Activated CD4-positive, alpha-beta memory T cell treated with anti-CD3 and anti-CD28 coated beads for 36 hours (primary cell): ENCODE measurements at regions of chr1 and their contacts with region 1.

Region 1: DNA sequence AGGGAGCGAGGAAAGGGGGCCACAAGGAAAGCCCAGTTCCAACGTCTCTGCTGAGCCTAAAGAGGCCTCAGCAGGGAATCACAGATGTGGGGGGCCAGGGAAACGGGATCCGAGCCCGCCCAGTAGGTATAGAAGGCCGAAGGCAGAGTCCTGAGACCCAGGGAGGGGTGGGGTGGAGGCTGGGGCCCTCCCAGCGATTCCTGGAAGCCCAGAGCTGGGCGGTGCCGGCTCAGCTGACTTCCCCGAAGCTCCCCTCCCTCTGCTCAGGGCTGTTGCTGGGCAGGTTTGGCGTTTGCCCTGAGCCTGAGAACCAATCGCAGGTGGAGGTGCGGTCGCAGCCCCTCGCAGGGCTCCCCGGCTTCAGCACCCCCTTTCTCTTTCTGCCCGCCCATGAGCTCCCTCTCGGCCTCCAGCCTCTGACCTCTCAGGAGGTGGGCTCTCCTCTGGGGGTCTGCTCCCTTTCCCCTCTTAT is 12.8 kb downstream of the ADAMTSL4 start:
- DNase-seq: peak; percentile 96
- H3K4me3 Mint-ChIP-seq: peak overlapping the region; percentile 89
- H3K27ac Mint-ChIP-seq: peak overlapping the region; percentile 99
- H3K4me1 Mint-ChIP-seq: peaks cover 54% of the 10 kb centered on the region
- H3K27me3 Mint-ChIP-seq: no peaks in the 10 kb centered on the region

Region 2: GRCh38 chr1:150168960-150169601 is 392.9 kb before region 1 on chr1:
- CTCF ChIA-PET with region 1: no interaction called
- POLR2A ChIA-PET with region 1: no interaction called
- intact Hi-C with region 1: no loop called
- DNase-seq: peak; percentile 76
- H3K4me3 Mint-ChIP-seq: no peak overlapping the region
- H3K27ac Mint-ChIP-seq: no peak overlapping the region
- H3K4me1 Mint-ChIP-seq: no peaks in the 10 kb centered on the region
- H3K27me3 Mint-ChIP-seq: no peaks in the 10 kb centered on the region

Region 3: GRCh38 chr1:150363426-150364230 is 198.4 kb before region 1 on chr1 and contains the start of gene RPRD2:
- CTCF ChIA-PET with region 1: interaction called, 5 read pairs
- POLR2A ChIA-PET with region 1: interaction called, 8 read pairs
- intact Hi-C with region 1: loop called (anchors 5 kb)
- DNase-seq: peak; percentile 100
- H3K4me3 Mint-ChIP-seq: peak within 1 kb of the TSS; percentile 99
- H3K27ac Mint-ChIP-seq: peak within 1 kb of the TSS; percentile 100
- H3K4me1 Mint-ChIP-seq: peaks cover 19% of the 10 kb centered on the region
- H3K27me3 Mint-ChIP-seq: peaks cover 1% of the 10 kb centered on the region
- total RNA-seq, gene RPRD2: 22.2 to 22.6 TPM

Region 4: DNA sequence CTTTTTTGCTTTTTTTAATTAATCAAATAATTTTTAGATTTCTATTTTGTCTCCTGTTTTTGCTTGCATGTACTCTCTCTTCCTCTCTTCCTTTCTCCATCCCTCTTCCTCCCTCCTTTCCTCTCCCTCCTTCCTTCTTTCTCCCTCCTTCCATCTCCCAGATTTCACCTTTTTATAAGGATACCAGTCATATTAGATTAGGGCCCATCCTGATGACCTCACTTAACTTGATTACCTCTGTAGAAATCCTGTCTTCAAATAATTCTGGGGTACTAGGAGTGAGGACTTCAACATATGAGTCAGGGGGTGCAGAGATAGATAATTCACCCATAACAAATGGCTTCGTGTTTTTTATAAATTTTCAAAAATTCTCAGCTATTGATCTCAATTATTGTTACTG is 112.6 kb before region 1 on chr1:
- CTCF ChIA-PET with region 1: no interaction called
- POLR2A ChIA-PET with region 1: no interaction called
- intact Hi-C with region 1: no loop called
- DNase-seq: no peak
- H3K4me3 Mint-ChIP-seq: no peak overlapping the region
- H3K27ac Mint-ChIP-seq: no peak overlapping the region
- H3K4me1 Mint-ChIP-seq: peaks cover 10% of the 10 kb centered on the region
- H3K27me3 Mint-ChIP-seq: no peaks in the 10 kb centered on the region

Region 5: GRCh38 chr1:150572918-150573647 is 11.1 kb after region 1 on chr1:
- CTCF ChIA-PET with region 1: interaction called, 276 read pairs
- POLR2A ChIA-PET with region 1: interaction called, 527 read pairs
- intact Hi-C with region 1: loop called (anchors 1 kb)
- DNase-seq: no peak
- H3K4me3 Mint-ChIP-seq: peak overlapping the region; percentile 93
- H3K27ac Mint-ChIP-seq: peak overlapping the region; percentile 98
- H3K4me1 Mint-ChIP-seq: peaks cover 65% of the 10 kb centered on the region
- H3K27me3 Mint-ChIP-seq: no peaks in the 10 kb centered on the region

Region 6: DNA sequence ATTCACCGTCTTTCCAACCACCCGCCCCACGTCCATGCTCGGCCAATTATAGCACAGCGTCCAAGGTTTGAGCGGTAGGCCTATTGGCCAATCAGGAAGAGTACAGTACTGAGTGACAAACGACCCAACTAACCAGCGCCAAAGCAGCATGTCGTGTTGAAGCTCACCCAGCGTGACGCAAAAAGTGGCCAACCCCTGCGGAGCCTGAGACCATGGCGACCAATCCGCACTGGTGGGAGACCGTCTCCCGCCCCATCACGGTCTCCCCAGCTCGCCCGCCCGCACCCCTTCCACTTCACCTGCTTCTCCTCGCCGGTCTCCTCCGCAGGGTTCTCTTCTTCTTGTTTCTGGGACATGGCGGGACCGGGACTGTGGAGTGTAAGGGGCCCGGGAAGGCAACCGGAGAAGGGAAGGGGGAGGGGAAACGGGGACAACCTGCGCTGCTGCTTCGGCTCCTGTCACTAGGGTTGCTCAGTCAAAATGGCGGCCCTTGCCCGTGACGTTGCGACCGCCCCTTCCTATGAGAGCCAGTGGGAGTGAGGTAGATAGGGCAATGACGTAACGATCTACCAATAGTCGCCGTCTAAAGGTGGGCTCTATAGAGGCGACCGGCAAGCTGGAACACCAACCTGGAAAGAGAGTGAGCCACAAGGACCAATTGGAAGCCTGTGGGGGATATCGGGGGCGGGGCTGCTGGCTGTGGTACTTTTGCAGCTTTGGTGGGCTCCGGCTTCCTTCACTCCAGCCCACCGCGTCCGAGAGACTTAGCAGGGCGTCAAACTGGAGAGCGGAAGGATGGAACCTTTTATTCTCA is 67.3 kb after region 1 on chr1 and contains the start of gene ENSA:
- CTCF ChIA-PET with region 1: interaction called, 243 read pairs
- POLR2A ChIA-PET with region 1: interaction called, 85 read pairs
- intact Hi-C with region 1: loop called (anchors 1 kb)
- DNase-seq: peak; percentile 97
- H3K4me3 Mint-ChIP-seq: no peak within 1 kb of the TSS
- H3K27ac Mint-ChIP-seq: no peak within 1 kb of the TSS
- H3K4me1 Mint-ChIP-seq: peaks cover 41% of the 10 kb centered on the region
- H3K27me3 Mint-ChIP-seq: no peaks in the 10 kb centered on the region
- total RNA-seq, gene ENSA: 212 to 219 TPM

Region 7: GRCh38 chr1:150925816-150926741 is 364.1 kb after region 1 on chr1 and contains the start of gene SETDB1:
- CTCF ChIA-PET with region 1: interaction called, 14 read pairs
- POLR2A ChIA-PET with region 1: interaction called, 4 read pairs
- intact Hi-C with region 1: loop called (anchors 2 kb)
- DNase-seq: peak; percentile 98
- H3K4me3 Mint-ChIP-seq: peak within 1 kb of the TSS; percentile 96
- H3K27ac Mint-ChIP-seq: peak within 1 kb of the TSS; percentile 94
- H3K4me1 Mint-ChIP-seq: peaks cover 21% of the 10 kb centered on the region
- H3K27me3 Mint-ChIP-seq: no peaks in the 10 kb centered on the region
- total RNA-seq, gene SETDB1: 42.3 to 50.0 TPM